Dorsolateral prefrontal cortex (tissue), 120 donors: ENCODE measurements at regions of chr15 and their contacts with region 1.

Region 1: DNA sequence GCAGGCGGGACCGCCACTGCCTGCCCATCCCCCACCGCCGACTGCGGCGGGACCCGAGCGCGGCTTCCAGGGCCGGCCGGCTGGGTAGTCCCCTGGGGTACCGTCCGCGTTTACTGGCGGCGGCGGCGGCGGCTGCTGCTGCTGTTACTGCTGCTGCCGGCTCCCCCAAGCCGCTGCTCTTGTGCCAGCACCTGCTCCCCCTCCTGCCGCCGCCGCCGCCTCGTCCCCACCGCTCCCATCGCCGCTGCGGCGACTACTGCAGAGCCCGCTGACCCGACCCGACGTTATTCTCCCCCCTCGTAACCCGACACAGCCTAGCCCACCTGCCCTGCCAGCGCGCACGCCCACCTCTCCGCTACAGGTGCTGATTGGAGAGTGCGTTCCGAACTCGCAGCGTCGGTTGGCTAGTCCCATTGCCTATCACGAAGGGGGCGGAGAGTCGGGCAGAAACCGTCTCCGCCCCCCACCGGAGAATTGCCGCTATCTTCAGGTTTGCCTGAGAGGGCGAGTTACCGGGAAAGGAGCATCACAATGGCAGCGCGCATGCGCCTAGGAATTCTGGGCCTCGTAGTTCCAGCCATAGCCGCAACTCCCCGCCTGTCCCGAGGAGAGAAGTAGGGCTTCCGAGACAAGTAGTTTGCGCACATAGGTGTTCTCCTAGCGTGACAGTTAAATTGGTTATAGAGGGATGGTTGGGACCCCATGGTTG is at the start of gene TTBK2:
- DNase-seq: peak; percentile 96 to 99 (median 98)
- H3K4me3 ChIP-seq: peak within 1 kb of the TSS; percentile 64 to 99 (median 93)
- H3K27ac ChIP-seq: peak within 1 kb of the TSS; percentile 58 to 97 (median 89)
- H3K27me3 ChIP-seq: no peaks in the 10 kb centered on the region
- CTCF ChIP-seq: peak in 46 of 56 donors; percentile 9 to 60 (median 36)
- total RNA-seq, gene TTBK2: 66.0 to 146 (median 112) TPM

Region 2: GRCh38 chr15:42575188-42576039 is 345.3 kb before region 1 on chr15 and contains the start of gene STARD9:
- intact Hi-C with region 1: loop called in 1 of 2 experiments (anchors 10 kb)
- DNase-seq: peak; percentile 97 to 99 (median 98)
- H3K4me3 ChIP-seq: peak within 1 kb of the TSS; percentile 58 to 99 (median 91)
- H3K27ac ChIP-seq: peak within 1 kb of the TSS; percentile 6 to 95 (median 86)
- H3K27me3 ChIP-seq: no peaks in the 10 kb centered on the region
- CTCF ChIP-seq: peak in 23 of 56 donors; percentile 5 to 50 (median 28)
- total RNA-seq, gene STARD9: 14.7 to 62.1 (median 30.1) TPM

Region 3: GRCh38 chr15:42704492-42704926 is 216.2 kb before region 1 on chr15:
- intact Hi-C with region 1: loop called in 1 of 2 experiments (anchors 10 kb)
- DNase-seq: peak in 6 of 10 donors; percentile 41 to 75 (median 62)
- H3K4me3 ChIP-seq: no peak overlapping the region
- H3K27ac ChIP-seq: no peak overlapping the region
- H3K27me3 ChIP-seq: no peaks in the 10 kb centered on the region
- CTCF ChIP-seq: peak in 55 of 56 donors; percentile 50 to 86 (median 74)

Region 4: GRCh38 chr15:42736793-42737528 is 183.7 kb before region 1 on chr15 and contains the start of gene CDAN1:
- intact Hi-C with region 1: loop called (anchors 5 kb)
- DNase-seq: peak; percentile 71 to 92 (median 85)
- H3K4me3 ChIP-seq: peak within 1 kb of the TSS; percentile 69 to 100 (median 89)
- H3K27ac ChIP-seq: peak within 1 kb of the TSS; percentile 26 to 95 (median 87)
- H3K27me3 ChIP-seq: no peaks in the 10 kb centered on the region
- CTCF ChIP-seq: peak in 23 of 56 donors; percentile 7 to 57 (median 26)
- total RNA-seq, gene CDAN1: 9.5 to 35.4 (median 18.6) TPM

Region 5: GRCh38 chr15:43183270-43183669 is 262.6 kb after region 1 on chr15:
- intact Hi-C with region 1: no loop called
- DNase-seq: no peak
- H3K4me3 ChIP-seq: no peak overlapping the region
- H3K27ac ChIP-seq: peak overlapping the region in 6 of 59 donors; percentile 1 to 54 (median 28)
- H3K27me3 ChIP-seq: no peaks in the 10 kb centered on the region
- CTCF ChIP-seq: no peak